ENCODE measurements at regions of chr4 and their contacts with region 1.

Region 1: DNA sequence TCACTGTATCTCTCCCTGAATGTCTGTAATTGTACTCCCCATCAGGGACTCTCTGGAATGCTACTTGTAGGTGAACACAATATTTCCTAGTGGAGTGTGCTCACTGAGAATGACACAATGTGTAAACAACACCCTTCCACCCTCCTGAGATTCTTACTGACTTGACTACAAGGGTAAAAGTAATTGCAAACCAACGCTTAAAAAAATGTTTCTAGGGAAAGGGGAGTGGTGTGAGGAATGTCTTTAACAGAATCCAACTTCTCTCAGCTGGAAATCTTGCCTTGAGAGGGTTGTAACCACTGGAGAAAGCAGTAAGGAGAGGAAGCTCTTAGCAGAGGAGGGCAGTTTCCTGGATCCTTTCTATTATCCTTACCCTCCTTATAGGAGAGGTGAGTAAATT is 5.1 kb upstream of the RAPGEF2 start:
- DNase-seq: no peak
- H3K4me3 ChIP-seq: no peak overlapping the region
- H3K27ac ChIP-seq: no peak overlapping the region
- H3K4me1 ChIP-seq: peaks cover 4% of the 10 kb centered on the region
- H3K27me3 ChIP-seq: peaks cover 3% of the 10 kb centered on the region
- CTCF ChIP-seq: no peak

Region 2: DNA sequence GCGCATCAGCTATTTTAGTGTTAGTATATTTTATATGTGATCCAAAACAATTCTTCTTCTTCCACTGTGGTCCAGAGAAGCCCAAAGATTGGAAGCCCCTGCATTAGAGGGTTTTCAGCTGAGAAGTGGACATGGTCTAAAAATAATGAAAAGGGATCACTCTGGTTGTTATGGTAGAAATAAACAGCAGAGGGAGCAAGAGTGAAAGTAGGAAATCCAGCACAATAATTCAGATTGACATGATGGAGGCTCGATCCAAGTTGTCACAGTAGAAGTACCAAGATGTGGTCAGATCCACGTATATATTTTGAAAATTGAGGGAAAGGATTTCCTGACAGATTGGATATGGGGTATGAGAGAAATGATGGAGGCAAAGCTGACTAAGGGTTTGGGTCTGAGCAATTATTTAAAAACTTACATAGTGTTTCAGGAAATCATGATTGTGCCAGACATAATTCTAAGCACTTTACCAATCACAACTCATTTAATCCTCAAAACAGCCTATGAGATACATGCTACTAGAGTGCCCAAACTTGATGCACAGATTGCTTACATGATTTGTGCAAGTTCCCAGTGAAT is 904.5 kb before region 1 on chr4:
- CTCF ChIA-PET with region 1: no interaction called
- POLR2A ChIA-PET with region 1: no interaction called
- intact Hi-C with region 1: no loop called
- DNase-seq: peak; percentile 70
- H3K4me3 ChIP-seq: no peak overlapping the region
- H3K27ac ChIP-seq: no peak overlapping the region
- H3K4me1 ChIP-seq: no peaks in the 10 kb centered on the region
- H3K27me3 ChIP-seq: no peaks in the 10 kb centered on the region
- CTCF ChIP-seq: peak; percentile 78

Region 3: GRCh38 chr4:158778156-158778711 is 319.6 kb before region 1 on chr4:
- CTCF ChIA-PET with region 1: no interaction called
- POLR2A ChIA-PET with region 1: no interaction called
- intact Hi-C with region 1: no loop called
- DNase-seq: no peak
- H3K4me3 ChIP-seq: no peak overlapping the region
- H3K27ac ChIP-seq: no peak overlapping the region
- H3K4me1 ChIP-seq: peaks cover 6% of the 10 kb centered on the region
- H3K27me3 ChIP-seq: no peaks in the 10 kb centered on the region
- CTCF ChIP-seq: no peak

Region 4: DNA sequence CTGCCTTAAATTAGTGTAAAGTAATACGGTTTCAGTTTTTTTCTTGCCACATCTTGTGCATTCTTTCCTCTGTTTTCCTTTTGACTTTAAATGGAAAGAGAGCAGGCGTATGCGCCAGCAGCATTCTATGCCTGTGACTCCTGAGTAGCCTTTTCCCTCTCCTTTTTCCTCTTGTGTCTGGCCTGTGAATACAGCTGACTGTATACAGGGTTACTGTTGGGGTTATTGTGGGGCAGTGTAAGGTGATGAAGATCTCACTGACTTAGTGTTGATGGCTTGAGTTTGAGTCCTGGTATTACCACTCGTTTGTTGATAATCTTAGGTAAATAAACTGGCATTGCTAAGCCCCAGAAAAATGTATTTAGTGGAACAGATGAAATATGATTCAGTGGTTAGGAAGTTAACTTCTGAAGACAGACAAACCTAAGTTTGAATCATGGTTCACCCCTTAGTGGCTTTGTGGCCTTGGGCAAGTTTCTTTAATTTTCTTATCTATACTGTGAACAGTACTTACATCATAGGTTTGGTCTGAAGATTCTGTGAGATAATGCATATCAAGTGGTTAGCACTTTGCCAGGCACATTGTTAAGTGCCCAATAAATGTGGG is 223.9 kb before region 1 on chr4:
- CTCF ChIA-PET with region 1: no interaction called
- POLR2A ChIA-PET with region 1: no interaction called
- intact Hi-C with region 1: loop called (anchors 5 kb)
- DNase-seq: no peak
- H3K4me3 ChIP-seq: no peak overlapping the region
- H3K27ac ChIP-seq: no peak overlapping the region
- H3K4me1 ChIP-seq: peaks cover 10% of the 10 kb centered on the region
- H3K27me3 ChIP-seq: no peaks in the 10 kb centered on the region
- CTCF ChIP-seq: no peak